CD4-positive, alpha-beta memory T cell (primary cell): ENCODE measurements at regions of chr14 and their contacts with region 1.

Region 1: DNA sequence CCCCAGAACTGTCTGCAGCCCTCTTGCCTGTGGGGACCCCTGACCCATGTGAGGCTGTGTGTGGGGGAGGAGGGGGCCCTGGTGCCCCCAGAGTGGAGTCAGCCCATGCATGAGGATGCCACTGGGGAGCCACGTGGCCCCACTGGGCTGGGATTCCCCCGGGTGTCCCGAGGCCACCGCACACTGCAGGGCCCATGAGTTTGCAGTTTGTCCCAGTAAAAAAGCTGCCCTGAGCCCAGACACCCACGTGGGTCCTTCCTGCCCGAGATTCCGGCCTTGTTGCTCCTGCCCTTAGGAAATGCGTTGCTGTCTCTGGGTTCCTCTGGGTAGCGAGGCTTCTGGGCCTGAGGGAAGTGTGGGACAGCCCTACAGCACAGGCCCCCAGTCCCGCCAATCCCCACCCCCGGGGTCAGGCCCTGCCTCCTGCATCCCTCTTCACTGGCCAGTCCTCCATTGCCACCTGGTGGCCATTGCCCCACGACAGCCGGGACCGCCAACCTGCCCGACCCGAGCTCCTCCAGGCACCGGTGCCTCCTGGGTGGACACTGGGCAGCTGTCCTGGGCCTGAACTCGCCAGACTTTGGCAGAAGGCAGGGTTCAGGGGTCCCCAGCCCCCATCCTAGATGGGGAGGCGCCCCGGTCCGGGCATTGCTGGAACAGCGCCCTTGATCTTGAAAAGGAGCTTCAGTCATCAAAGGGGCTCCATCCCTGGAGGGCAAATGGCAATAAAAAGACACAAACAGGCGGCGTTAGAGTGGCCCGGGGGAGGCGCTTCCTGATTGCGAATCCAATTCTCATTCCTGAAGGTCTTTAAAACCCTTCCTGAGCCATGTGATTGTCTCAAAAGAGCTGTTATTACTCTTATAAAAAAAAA is 15.6 kb upstream of the C14orf180 start:
- DNase-seq: peak; percentile 57 to 64 (median 60)
- H3K4me3 ChIP-seq: no peak overlapping the region
- H3K4me3 Mint-ChIP-seq: peak overlapping the region in 1 of 8 donors; percentile 45
- H3K27ac ChIP-seq: no peak overlapping the region
- H3K27ac Mint-ChIP-seq: no peak overlapping the region
- H3K4me1 ChIP-seq: no peaks in the 10 kb centered on the region
- H3K4me1 Mint-ChIP-seq: peaks cover 0 to 2% (median 0%) of the 10 kb centered on the region in 4 donors
- H3K27me3 ChIP-seq: no peaks in the 10 kb centered on the region
- H3K27me3 Mint-ChIP-seq: peaks cover 12 to 14% of the 10 kb centered on the region in 2 donors

Region 2: GRCh38 chr14:104137297-104138097 is 426.5 kb before region 1 on chr14:
- CTCF ChIA-PET with region 1: interaction called, 14 read pairs
- POLR2A ChIA-PET with region 1: no interaction called
- intact Hi-C with region 1: no loop called
- DNase-seq: peak in 4 of 5 donors; percentile 43 to 60 (median 52)
- H3K4me3 ChIP-seq: peak overlapping the region in 1 of 2 donors; percentile 24
- H3K4me3 Mint-ChIP-seq: peak overlapping the region; percentile 36 to 70 (median 64)
- H3K27ac ChIP-seq: no peak overlapping the region
- H3K27ac Mint-ChIP-seq: peak overlapping the region in 2 of 7 donors; percentile 15 to 57
- H3K4me1 ChIP-seq: peaks cover 15% of the 10 kb centered on the region
- H3K4me1 Mint-ChIP-seq: peaks cover 2 to 9% (median 5%) of the 10 kb centered on the region in 4 donors
- H3K27me3 ChIP-seq: peaks cover 13% of the 10 kb centered on the region
- H3K27me3 Mint-ChIP-seq: peaks cover 23 to 25% of the 10 kb centered on the region in 2 donors

Region 3: GRCh38 chr14:104144911-104145745 is 418.9 kb before region 1 on chr14:
- CTCF ChIA-PET with region 1: interaction called, 10 read pairs
- POLR2A ChIA-PET with region 1: no interaction called
- intact Hi-C with region 1: no loop called
- DNase-seq: no peak
- H3K4me3 ChIP-seq: no peak overlapping the region
- H3K4me3 Mint-ChIP-seq: no peak overlapping the region
- H3K27ac ChIP-seq: no peak overlapping the region
- H3K27ac Mint-ChIP-seq: no peak overlapping the region
- H3K4me1 ChIP-seq: no peaks in the 10 kb centered on the region
- H3K4me1 Mint-ChIP-seq: no peaks in the 10 kb centered on the region
- H3K27me3 ChIP-seq: no peaks in the 10 kb centered on the region
- H3K27me3 Mint-ChIP-seq: peaks cover 3 to 4% of the 10 kb centered on the region in 2 donors

Region 4: DNA sequence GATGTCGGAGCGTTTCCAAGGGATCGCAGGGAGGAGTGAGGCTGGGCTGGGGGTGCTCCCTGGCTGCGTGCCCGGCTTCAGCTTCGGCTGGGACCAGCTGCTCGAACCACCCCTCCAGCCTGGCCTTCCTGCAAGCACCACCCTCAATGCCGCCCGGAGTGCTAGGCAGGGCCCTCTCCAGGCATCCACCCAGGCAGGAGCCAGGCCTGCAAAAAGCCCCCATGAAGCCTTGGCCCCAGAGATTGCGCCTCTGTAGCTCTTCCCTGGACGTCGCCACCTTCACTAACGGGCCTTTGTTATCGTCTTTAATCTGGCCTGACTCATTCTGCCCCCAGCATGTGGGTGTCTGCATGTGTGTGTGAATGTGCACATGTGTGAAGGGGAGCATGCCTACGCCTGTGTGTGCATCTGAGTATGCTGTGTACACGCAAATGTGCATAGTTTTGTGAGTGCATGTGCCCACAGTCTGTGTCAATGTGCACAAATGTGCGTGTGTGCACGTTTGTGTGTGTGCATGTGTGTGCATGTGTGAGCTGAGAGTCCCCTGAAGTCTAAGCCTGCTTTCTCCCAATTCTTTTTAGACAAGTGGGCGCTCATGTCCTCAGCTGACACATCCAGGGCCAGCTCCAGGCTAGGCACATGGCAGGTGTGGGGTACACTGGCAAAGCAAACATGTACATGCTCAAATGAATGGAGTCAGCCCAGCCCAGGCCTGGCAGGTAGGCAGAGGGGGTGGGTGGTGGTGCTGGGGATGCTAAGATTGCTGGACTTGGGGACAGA is 179.8 kb before region 1 on chr14:
- CTCF ChIA-PET with region 1: no interaction called
- POLR2A ChIA-PET with region 1: no interaction called
- intact Hi-C with region 1: no loop called
- DNase-seq: no peak
- H3K4me3 ChIP-seq: no peak overlapping the region
- H3K4me3 Mint-ChIP-seq: peak overlapping the region in 1 of 8 donors; percentile 17
- H3K27ac ChIP-seq: no peak overlapping the region
- H3K27ac Mint-ChIP-seq: peak overlapping the region in 4 of 7 donors; percentile 42 to 68 (median 52)
- H3K4me1 ChIP-seq: peaks cover 7% of the 10 kb centered on the region
- H3K4me1 Mint-ChIP-seq: peaks cover 4 to 24% (median 16%) of the 10 kb centered on the region in 4 donors
- H3K27me3 ChIP-seq: no peaks in the 10 kb centered on the region
- H3K27me3 Mint-ChIP-seq: no peaks in the 10 kb centered on the region